ENCODE measurements at regions of chr11 and their contacts with region 1.

Region 1: DNA sequence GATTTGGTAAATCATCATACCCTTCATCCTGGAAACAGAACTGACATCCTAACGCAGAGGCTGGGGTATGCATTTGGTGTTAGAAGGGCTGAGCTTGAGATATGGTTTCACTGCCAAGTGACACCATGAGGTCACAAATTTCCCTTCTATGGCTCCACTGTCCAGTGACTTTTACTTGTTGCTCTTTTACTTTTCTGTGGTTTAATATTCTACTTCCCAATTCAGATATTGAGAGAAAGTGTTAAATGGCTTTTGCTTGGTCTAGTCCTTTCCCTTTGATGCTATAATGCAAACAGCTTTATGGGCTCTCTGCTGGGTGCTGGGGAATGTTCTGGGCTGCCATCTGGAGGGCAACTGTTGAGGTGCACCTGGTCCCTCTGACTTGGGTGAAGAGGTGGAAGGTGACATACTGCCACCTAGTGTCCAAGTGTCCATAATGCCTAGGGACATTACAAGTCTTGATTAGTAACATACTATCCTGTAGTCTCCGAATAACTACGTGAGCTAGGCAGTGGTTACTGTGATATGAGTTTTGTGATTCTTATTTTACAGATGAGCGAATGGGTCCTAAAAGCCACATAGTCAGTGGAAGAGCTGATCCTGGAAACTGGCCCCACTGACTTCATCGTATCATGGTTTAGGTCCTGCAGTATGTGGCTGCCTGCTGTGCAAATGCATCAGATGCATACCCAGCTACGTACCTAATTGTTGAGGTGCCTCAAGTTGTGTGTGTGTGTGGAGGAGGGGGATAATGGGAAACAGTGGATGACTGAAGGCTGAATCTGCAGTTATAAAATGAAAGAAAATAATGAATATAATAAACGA is 149.1 kb upstream of the RAG2 start:
- DNase-seq: peak; percentile 99
- H3K4me3 ChIP-seq: no peak overlapping the region
- H3K27ac ChIP-seq: no peak overlapping the region
- H3K4me1 ChIP-seq: peaks cover 11% of the 10 kb centered on the region
- H3K27me3 ChIP-seq: peaks cover 19% of the 10 kb centered on the region
- CTCF ChIP-seq: peak; percentile 100

Region 2: GRCh38 chr11:36056160-36056751 is 690.8 kb before region 1 on chr11:
- CTCF ChIA-PET with region 1: no interaction called
- POLR2A ChIA-PET with region 1: no interaction called
- intact Hi-C with region 1: no loop called
- DNase-seq: peak; percentile 87
- H3K4me3 ChIP-seq: no peak overlapping the region
- H3K27ac ChIP-seq: no peak overlapping the region
- H3K4me1 ChIP-seq: peaks cover 4% of the 10 kb centered on the region
- H3K27me3 ChIP-seq: no peaks in the 10 kb centered on the region
- CTCF ChIP-seq: peak; percentile 100

Region 3: GRCh38 chr11:36289226-36289852 is 457.8 kb before region 1 on chr11 and contains the start of gene COMMD9:
- CTCF ChIA-PET with region 1: interaction called, 3 read pairs
- POLR2A ChIA-PET with region 1: no interaction called
- intact Hi-C with region 1: loop called (anchors 2 kb)
- DNase-seq: peak; percentile 100
- H3K4me3 ChIP-seq: peak within 1 kb of the TSS; percentile 61
- H3K27ac ChIP-seq: peak within 1 kb of the TSS; percentile 39
- H3K4me1 ChIP-seq: peaks cover 17% of the 10 kb centered on the region
- H3K27me3 ChIP-seq: no peaks in the 10 kb centered on the region
- CTCF ChIP-seq: no peak
- total RNA-seq, gene COMMD9: 147 and 154 TPM in 2 replicates

Region 4: DNA sequence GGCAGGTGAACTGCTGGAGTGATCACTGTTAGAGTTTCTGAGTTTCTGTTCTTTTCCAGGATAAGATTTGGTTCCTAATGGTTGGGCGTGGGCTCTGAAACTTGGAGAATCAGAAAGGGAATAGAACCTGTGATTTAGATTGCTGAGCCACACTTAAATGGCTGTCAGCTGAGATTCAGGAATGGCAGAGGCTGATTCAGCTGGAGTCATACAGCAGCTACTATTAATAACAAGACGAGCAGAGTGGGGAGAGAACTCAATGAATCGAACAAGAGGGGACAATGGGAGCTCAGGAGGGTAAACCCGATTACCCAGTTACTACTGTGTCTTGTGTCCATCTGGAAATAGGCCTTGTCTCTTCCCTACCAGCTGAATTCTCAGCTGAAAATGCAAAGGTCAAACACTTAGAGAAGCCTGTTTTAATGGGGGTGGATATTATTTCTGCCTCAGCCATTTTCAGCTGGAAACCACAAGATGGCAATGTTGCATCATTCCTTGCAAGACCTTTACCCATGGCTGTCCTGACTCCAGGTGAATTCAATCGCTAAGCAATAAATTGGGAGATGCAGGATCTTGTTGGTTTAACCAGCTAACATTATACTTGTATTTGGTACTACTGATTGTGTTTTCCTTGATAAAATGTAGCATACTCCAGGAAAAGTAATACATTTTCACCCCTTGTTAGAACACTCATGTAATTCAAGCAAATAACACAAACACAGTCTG is 44.6 kb before region 1 on chr11:
- CTCF ChIA-PET with region 1: interaction called, 113 read pairs
- POLR2A ChIA-PET with region 1: no interaction called
- intact Hi-C with region 1: loop called (anchors 1 kb)
- DNase-seq: peak; percentile 92
- H3K4me3 ChIP-seq: no peak overlapping the region
- H3K27ac ChIP-seq: no peak overlapping the region
- H3K4me1 ChIP-seq: peaks cover 15% of the 10 kb centered on the region
- H3K27me3 ChIP-seq: no peaks in the 10 kb centered on the region
- CTCF ChIP-seq: peak; percentile 99

Region 5: GRCh38 chr11:36729825-36730224 is 17.3 kb before region 1 on chr11:
- CTCF ChIA-PET with region 1: interaction called, 29 read pairs
- POLR2A ChIA-PET with region 1: no interaction called
- intact Hi-C with region 1: no loop called
- DNase-seq: peak; percentile 55
- H3K4me3 ChIP-seq: no peak overlapping the region
- H3K27ac ChIP-seq: no peak overlapping the region
- H3K4me1 ChIP-seq: no peaks in the 10 kb centered on the region
- H3K27me3 ChIP-seq: peaks cover 51% of the 10 kb centered on the region
- CTCF ChIP-seq: no peak

Measured in A673 (cell line).